Upper lobe of right lung (tissue), 1 donor: ENCODE measurements at regions of chr12 and their contacts with region 1.

Region 1: GRCh38 chr12:10235761-10236631 is 23.3 kb downstream of the GABARAPL1 start:
- DNase-seq: no peak
- ATAC-seq: peak; percentile 92
- H3K4me3 ChIP-seq: no peak overlapping the region
- H3K27ac ChIP-seq: no peak overlapping the region
- H3K4me1 ChIP-seq: no peaks in the 10 kb centered on the region
- H3K27me3 ChIP-seq: no peaks in the 10 kb centered on the region
- CTCF ChIP-seq: peak; percentile 93

Region 2: DNA sequence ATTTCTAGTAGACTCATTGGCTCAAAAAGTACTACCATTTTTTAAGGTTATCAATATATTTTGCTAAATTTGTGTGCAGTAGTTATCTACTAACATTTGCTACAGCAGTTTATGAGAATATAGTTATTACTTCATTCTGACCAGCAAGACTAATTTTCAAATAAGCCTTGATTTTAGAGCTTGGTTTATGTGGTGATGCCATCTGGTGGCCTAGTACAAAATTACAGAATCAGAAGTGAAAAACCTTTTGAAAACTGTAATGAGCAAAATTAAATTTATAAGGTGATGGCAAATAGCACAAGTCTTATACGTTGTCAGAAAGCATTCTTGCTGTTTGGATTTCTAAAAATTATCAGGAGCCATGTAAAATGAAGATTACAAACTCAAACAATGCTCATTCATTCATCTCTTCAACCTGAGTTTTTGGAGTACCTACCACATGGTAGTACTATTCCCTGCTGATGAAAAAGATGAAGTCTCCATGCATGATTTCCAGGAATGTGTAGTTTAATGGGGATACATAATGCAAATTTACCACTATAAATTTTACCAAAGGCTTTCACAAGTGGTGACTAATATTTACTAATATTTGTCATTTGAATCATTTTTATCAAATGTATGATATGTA is 326.4 kb after region 1 on chr12:
- intact Hi-C with region 1: loop called (anchors 5 kb)
- DNase-seq: no peak
- ATAC-seq: peak; percentile 66
- H3K4me3 ChIP-seq: no peak overlapping the region
- H3K27ac ChIP-seq: no peak overlapping the region
- H3K4me1 ChIP-seq: no peaks in the 10 kb centered on the region
- H3K27me3 ChIP-seq: no peaks in the 10 kb centered on the region
- CTCF ChIP-seq: peak; percentile 83

Region 3: DNA sequence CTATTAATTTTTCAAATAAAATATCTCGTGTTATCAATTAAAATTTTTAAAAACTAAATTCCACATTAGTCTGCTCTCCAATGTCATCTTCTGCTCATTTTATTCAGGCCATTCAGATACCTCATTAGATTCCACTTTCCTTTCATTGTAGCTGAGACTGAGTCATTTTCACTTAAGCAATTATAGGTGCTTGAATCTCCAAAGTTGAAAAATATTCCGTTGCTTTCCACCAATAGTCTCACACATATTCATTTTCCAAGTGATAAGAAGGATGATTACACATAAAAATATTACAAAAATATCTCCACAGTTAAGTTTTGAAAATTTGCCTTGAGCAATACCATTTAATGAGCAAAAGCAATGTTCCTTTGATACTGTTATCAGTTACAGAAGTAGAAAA is 523.7 kb after region 1 on chr12:
- intact Hi-C with region 1: no loop called
- DNase-seq: no peak
- ATAC-seq: no peak
- H3K4me3 ChIP-seq: no peak overlapping the region
- H3K27ac ChIP-seq: no peak overlapping the region
- H3K4me1 ChIP-seq: no peaks in the 10 kb centered on the region
- H3K27me3 ChIP-seq: no peaks in the 10 kb centered on the region
- CTCF ChIP-seq: no peak